Naive thymus-derived CD4-positive, alpha-beta T cell (primary cell): ENCODE measurements at regions of chr9 and their contacts with region 1.

Region 1: GRCh38 chr9:128067876-128068613 is at the start of gene SLC25A25:
- DNase-seq: peak; percentile 99 to 100 (median 100)
- ATAC-seq: peak; percentile 92
- H3K4me3 ChIP-seq: peak within 1 kb of the TSS; percentile 96
- H3K4me3 Mint-ChIP-seq: peak within 1 kb of the TSS in 8 of 10 donors; percentile 91 to 99 (median 94)
- H3K27ac ChIP-seq: peak within 1 kb of the TSS; percentile 88
- H3K27ac Mint-ChIP-seq: peak within 1 kb of the TSS; percentile 74 to 94 (median 85)
- H3K4me1 ChIP-seq: peaks cover 50 to 54% of the 10 kb centered on the region in 2 donors
- H3K4me1 Mint-ChIP-seq: peaks cover 38 to 69% (median 51%) of the 10 kb centered on the region in 7 donors
- H3K27me3 ChIP-seq: no peaks in the 10 kb centered on the region
- H3K27me3 Mint-ChIP-seq: no peaks in the 10 kb centered on the region
- total RNA-seq, gene SLC25A25: 12.4 to 26.3 (median 15.1) TPM

Region 2: GRCh38 chr9:127715394-127716337 is 352.4 kb before region 1 on chr9 and contains the starts of genes PTRH1 and TTC16:
- CTCF ChIA-PET with region 1: no interaction called
- POLR2A ChIA-PET with region 1: no interaction called
- intact Hi-C with region 1: loop called in 1 of 2 experiments (anchors 5 kb)
- DNase-seq: peak; percentile 91 to 98 (median 96)
- ATAC-seq: peak; percentile 96
- H3K4me3 ChIP-seq: peak within 1 kb of the TSS; percentile 85
- H3K4me3 Mint-ChIP-seq: peak within 1 kb of the TSS; percentile 93 to 100 (median 98)
- H3K27ac ChIP-seq: peak within 1 kb of the TSS; percentile 89
- H3K27ac Mint-ChIP-seq: peak within 1 kb of the TSS; percentile 86 to 99 (median 97)
- H3K4me1 ChIP-seq: peaks cover 31 to 32% of the 10 kb centered on the region in 2 donors
- H3K4me1 Mint-ChIP-seq: peaks cover 28 to 47% (median 30%) of the 10 kb centered on the region in 7 donors
- H3K27me3 ChIP-seq: no peaks in the 10 kb centered on the region
- H3K27me3 Mint-ChIP-seq: no peaks in the 10 kb centered on the region
- total RNA-seq, gene PTRH1: 7.8 to 9.5 (median 8.6) TPM
- total RNA-seq, gene TTC16: 0.29 to 9.9 (median 4.6) TPM

Region 3: GRCh38 chr9:127980706-127981558 is 87.1 kb before region 1 on chr9 and contains the start of gene EEIG1:
- CTCF ChIA-PET with region 1: interaction called, 4 read pairs
- POLR2A ChIA-PET with region 1: interaction called, 12 read pairs
- intact Hi-C with region 1: loop called (anchors 1 kb)
- DNase-seq: peak; percentile 95 to 100 (median 99)
- ATAC-seq: peak; percentile 96
- H3K4me3 ChIP-seq: peak within 1 kb of the TSS; percentile 93
- H3K4me3 Mint-ChIP-seq: peak within 1 kb of the TSS; percentile 93 to 99 (median 98)
- H3K27ac ChIP-seq: peak within 1 kb of the TSS; percentile 84
- H3K27ac Mint-ChIP-seq: peak within 1 kb of the TSS; percentile 92 to 100 (median 98)
- H3K4me1 ChIP-seq: peaks cover 25 to 38% of the 10 kb centered on the region in 2 donors
- H3K4me1 Mint-ChIP-seq: peaks cover 35 to 47% (median 42%) of the 10 kb centered on the region in 7 donors
- H3K27me3 ChIP-seq: no peaks in the 10 kb centered on the region
- H3K27me3 Mint-ChIP-seq: no peaks in the 10 kb centered on the region
- total RNA-seq, gene EEIG1: 252 to 664 (median 347) TPM

Region 4: DNA sequence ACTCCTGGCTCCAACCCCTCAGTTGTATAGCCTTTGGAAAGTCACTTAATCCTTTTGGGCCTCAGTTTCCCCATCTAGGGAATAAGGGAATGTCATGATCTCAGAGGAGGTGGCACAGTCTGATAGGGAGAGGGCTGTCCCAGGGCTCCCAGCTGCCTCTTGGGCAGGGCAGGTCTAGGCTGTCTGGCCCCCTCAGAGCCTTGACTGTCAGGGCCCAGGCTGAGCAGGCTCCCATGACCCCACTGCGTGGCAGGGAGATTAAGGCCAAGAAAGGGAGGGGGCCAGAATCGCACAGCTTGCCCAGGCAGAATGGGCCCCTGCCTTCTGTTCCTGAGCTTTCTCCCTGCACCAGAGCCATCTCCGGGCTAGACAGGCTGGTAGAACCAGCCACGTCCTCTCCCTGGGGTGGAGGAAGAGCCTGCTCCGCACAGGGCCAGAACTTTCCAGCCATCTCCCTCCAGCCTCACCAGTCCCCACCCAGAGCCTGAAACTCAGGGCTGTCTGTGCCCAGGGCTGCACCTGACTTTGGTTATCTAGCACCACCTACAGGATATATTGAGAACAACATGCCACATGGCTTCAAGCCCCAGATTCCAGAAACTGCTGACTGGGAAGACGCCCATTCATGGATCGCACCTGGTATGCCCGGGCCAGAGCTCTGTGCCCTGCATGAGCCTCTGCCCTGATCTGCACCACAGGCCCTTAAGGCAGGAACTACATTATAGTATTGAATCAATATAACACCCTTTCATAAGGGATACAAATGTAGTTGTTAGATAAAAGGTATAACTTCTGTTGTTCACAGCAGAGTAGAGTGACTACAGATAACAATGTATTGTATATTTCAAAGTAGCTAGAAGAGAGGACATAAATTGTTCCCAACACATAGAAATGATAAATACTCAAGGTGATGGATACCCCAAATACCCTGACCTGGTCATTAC is 33.0 kb before region 1 on chr9:
- CTCF ChIA-PET with region 1: interaction called, 12 read pairs
- POLR2A ChIA-PET with region 1: interaction called, 7 read pairs
- intact Hi-C with region 1: loop called in 1 of 2 experiments (anchors 1 kb)
- DNase-seq: peak; percentile 33 to 86 (median 78)
- ATAC-seq: peak; percentile 82
- H3K4me3 ChIP-seq: peak overlapping the region; percentile 18
- H3K4me3 Mint-ChIP-seq: peak overlapping the region; percentile 44 to 70 (median 60)
- H3K27ac ChIP-seq: peak overlapping the region; percentile 63
- H3K27ac Mint-ChIP-seq: peak overlapping the region; percentile 70 to 96 (median 90)
- H3K4me1 ChIP-seq: peaks cover 40 to 44% of the 10 kb centered on the region in 2 donors
- H3K4me1 Mint-ChIP-seq: peaks cover 8 to 45% (median 37%) of the 10 kb centered on the region in 7 donors
- H3K27me3 ChIP-seq: no peaks in the 10 kb centered on the region
- H3K27me3 Mint-ChIP-seq: no peaks in the 10 kb centered on the region

Region 5: DNA sequence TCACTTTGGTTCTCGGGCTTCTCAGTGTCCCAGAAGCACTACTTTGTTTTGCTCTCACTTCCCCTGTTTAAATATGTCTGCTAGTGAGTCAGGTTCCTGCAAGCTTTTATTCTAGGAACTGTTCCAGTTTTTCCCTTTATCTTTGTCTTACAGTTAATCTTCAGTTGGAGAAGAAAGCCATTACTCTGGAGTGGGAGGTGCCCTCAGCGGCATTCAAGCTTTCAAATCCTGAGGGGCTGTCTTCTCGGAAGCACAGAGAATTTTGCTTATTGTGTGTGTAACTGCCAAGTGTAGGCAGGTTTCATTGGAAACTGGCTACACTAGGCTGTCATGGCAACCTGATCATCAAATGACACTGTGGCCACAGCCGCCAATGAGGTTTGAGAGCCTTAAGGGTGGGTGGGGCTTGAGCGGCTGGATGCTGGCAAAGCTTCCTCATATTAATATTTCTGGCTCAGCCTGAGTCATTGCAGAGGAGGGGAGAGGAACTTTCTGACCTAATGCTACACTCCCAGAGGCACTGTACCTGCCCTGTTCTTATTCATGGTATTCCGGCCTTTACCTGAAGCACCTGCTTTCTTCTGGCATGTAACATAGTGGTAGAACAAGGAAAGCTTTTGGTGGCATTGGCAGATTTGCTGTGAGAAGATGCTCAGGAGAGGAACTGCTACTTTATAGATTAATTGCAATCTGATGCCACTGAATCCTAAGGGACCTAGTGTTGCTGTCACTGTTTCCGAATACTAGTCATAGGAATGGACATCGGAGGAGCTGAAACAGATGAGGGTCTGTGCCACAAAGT is 26.3 kb after region 1 on chr9:
- CTCF ChIA-PET with region 1: interaction called, 10 read pairs
- POLR2A ChIA-PET with region 1: interaction called, 28 read pairs
- intact Hi-C with region 1: loop called in 1 of 2 experiments (anchors 1 kb)
- DNase-seq: peak; percentile 38 to 85 (median 71)
- ATAC-seq: peak; percentile 83
- H3K4me3 ChIP-seq: no peak overlapping the region
- H3K4me3 Mint-ChIP-seq: peak overlapping the region; percentile 39 to 83 (median 72)
- H3K27ac ChIP-seq: peak overlapping the region; percentile 71
- H3K27ac Mint-ChIP-seq: peak overlapping the region; percentile 86 to 99 (median 96)
- H3K4me1 ChIP-seq: peaks cover 18 to 72% of the 10 kb centered on the region in 2 donors
- H3K4me1 Mint-ChIP-seq: peaks cover 50 to 85% (median 72%) of the 10 kb centered on the region in 7 donors
- H3K27me3 ChIP-seq: no peaks in the 10 kb centered on the region
- H3K27me3 Mint-ChIP-seq: no peaks in the 10 kb centered on the region

Region 6: GRCh38 chr9:128127990-128128835 is 60.2 kb after region 1 on chr9:
- CTCF ChIA-PET with region 1: interaction called, 3 read pairs
- POLR2A ChIA-PET with region 1: no interaction called
- intact Hi-C with region 1: loop called (anchors 1 to 2 kb)
- DNase-seq: peak; percentile 81 to 96 (median 93)
- ATAC-seq: peak; percentile 89
- H3K4me3 ChIP-seq: peak overlapping the region; percentile 99
- H3K4me3 Mint-ChIP-seq: peak overlapping the region; percentile 93 to 99 (median 98)
- H3K27ac ChIP-seq: peak overlapping the region; percentile 98
- H3K27ac Mint-ChIP-seq: peak overlapping the region; percentile 97 to 100 (median 99)
- H3K4me1 ChIP-seq: peaks cover 16 to 20% of the 10 kb centered on the region in 2 donors
- H3K4me1 Mint-ChIP-seq: peaks cover 22 to 44% (median 35%) of the 10 kb centered on the region in 7 donors
- H3K27me3 ChIP-seq: no peaks in the 10 kb centered on the region
- H3K27me3 Mint-ChIP-seq: peaks cover 0 to 24% (median 3%) of the 10 kb centered on the region in 5 donors

Region 7: GRCh38 chr9:128249908-128250838 is 182.1 kb after region 1 on chr9:
- CTCF ChIA-PET with region 1: no interaction called
- POLR2A ChIA-PET with region 1: no interaction called
- intact Hi-C with region 1: loop called in 1 of 2 experiments (anchors 1 kb)
- DNase-seq: peak; percentile 96 to 100 (median 98)
- ATAC-seq: peak; percentile 98
- H3K4me3 ChIP-seq: peak overlapping the region; percentile 83
- H3K4me3 Mint-ChIP-seq: peak overlapping the region; percentile 79 to 93 (median 88)
- H3K27ac ChIP-seq: peak overlapping the region; percentile 72
- H3K27ac Mint-ChIP-seq: peak overlapping the region; percentile 60 to 97 (median 95)
- H3K4me1 ChIP-seq: peaks cover 7 to 9% of the 10 kb centered on the region in 2 donors
- H3K4me1 Mint-ChIP-seq: peaks cover 7 to 28% (median 17%) of the 10 kb centered on the region in 7 donors
- H3K27me3 ChIP-seq: no peaks in the 10 kb centered on the region
- H3K27me3 Mint-ChIP-seq: peaks cover 0 to 39% (median 6%) of the 10 kb centered on the region in 5 donors

Region 8: GRCh38 chr9:128275996-128276573 is 208.0 kb after region 1 on chr9 and contains the starts of genes GOLGA2 and SWI5:
- CTCF ChIA-PET with region 1: no interaction called
- POLR2A ChIA-PET with region 1: no interaction called
- intact Hi-C with region 1: no loop called
- DNase-seq: peak; percentile 98 to 100 (median 100)
- ATAC-seq: peak; percentile 98
- H3K4me3 ChIP-seq: peak within 1 kb of the TSS; percentile 95
- H3K4me3 Mint-ChIP-seq: peak within 1 kb of the TSS; percentile 94 to 98 (median 96)
- H3K27ac ChIP-seq: peak within 1 kb of the TSS; percentile 90
- H3K27ac Mint-ChIP-seq: peak within 1 kb of the TSS; percentile 94 to 98 (median 97)
- H3K4me1 ChIP-seq: peaks cover 16 to 21% of the 10 kb centered on the region in 2 donors
- H3K4me1 Mint-ChIP-seq: peaks cover 24 to 51% (median 46%) of the 10 kb centered on the region in 7 donors
- H3K27me3 ChIP-seq: no peaks in the 10 kb centered on the region
- H3K27me3 Mint-ChIP-seq: peaks cover 0 to 7% (median 0%) of the 10 kb centered on the region in 5 donors
- total RNA-seq, gene GOLGA2: 56.5 to 76.6 (median 70.6) TPM
- total RNA-seq, gene SWI5: 8.7 to 17.4 (median 9.8) TPM